CD4-positive, alpha-beta T cell (primary cell): ENCODE measurements at regions of chr1 and their contacts with region 1.

Region 1: GRCh38 chr1:16351994-16352841 is at the start of gene FBXO42:
- DNase-seq: peak; percentile 82 to 98 (median 91)
- ATAC-seq: peak; percentile 90
- H3K4me3 ChIP-seq: peak within 1 kb of the TSS; percentile 97
- H3K4me3 Mint-ChIP-seq: peak within 1 kb of the TSS; percentile 97
- H3K27ac ChIP-seq: peak within 1 kb of the TSS; percentile 83 to 89
- H3K27ac Mint-ChIP-seq: peak within 1 kb of the TSS; percentile 93
- H3K4me1 ChIP-seq: peaks cover 30% of the 10 kb centered on the region
- H3K4me1 Mint-ChIP-seq: peaks cover 34% of the 10 kb centered on the region
- H3K27me3 ChIP-seq: no peaks in the 10 kb centered on the region
- H3K27me3 Mint-ChIP-seq: no peaks in the 10 kb centered on the region
- CTCF ChIP-seq: peak; percentile 52
- total RNA-seq, gene FBXO42: 14.3 to 14.9 TPM

Region 2: GRCh38 chr1:16409536-16410152 is 57.4 kb after region 1 on chr1:
- CTCF ChIA-PET with region 1: no interaction called
- POLR2A ChIA-PET with region 1: no interaction called
- intact Hi-C with region 1: no loop called
- DNase-seq: no peak
- ATAC-seq: no peak
- H3K4me3 ChIP-seq: no peak overlapping the region
- H3K4me3 Mint-ChIP-seq: no peak overlapping the region
- H3K27ac ChIP-seq: no peak overlapping the region
- H3K27ac Mint-ChIP-seq: no peak overlapping the region
- H3K4me1 ChIP-seq: no peaks in the 10 kb centered on the region
- H3K4me1 Mint-ChIP-seq: no peaks in the 10 kb centered on the region
- H3K27me3 ChIP-seq: no peaks in the 10 kb centered on the region
- H3K27me3 Mint-ChIP-seq: no peaks in the 10 kb centered on the region
- CTCF ChIP-seq: no peak

Region 3: GRCh38 chr1:16464903-16465625 is 112.8 kb after region 1 on chr1:
- CTCF ChIA-PET with region 1: no interaction called
- POLR2A ChIA-PET with region 1: no interaction called
- intact Hi-C with region 1: no loop called
- DNase-seq: no peak
- ATAC-seq: no peak
- H3K4me3 ChIP-seq: no peak overlapping the region
- H3K4me3 Mint-ChIP-seq: no peak overlapping the region
- H3K27ac ChIP-seq: no peak overlapping the region
- H3K27ac Mint-ChIP-seq: no peak overlapping the region
- H3K4me1 ChIP-seq: no peaks in the 10 kb centered on the region
- H3K4me1 Mint-ChIP-seq: peaks cover 25% of the 10 kb centered on the region
- H3K27me3 ChIP-seq: no peaks in the 10 kb centered on the region
- H3K27me3 Mint-ChIP-seq: no peaks in the 10 kb centered on the region
- CTCF ChIP-seq: no peak

Region 4: GRCh38 chr1:16913833-16914662 is 561.8 kb after region 1 on chr1:
- CTCF ChIA-PET with region 1: no interaction called
- POLR2A ChIA-PET with region 1: no interaction called
- intact Hi-C with region 1: loop called in 1 of 2 experiments (anchors 5 kb)
- DNase-seq: peak; percentile 80 to 100 (median 96)
- ATAC-seq: peak; percentile 93
- H3K4me3 ChIP-seq: peak overlapping the region; percentile 67
- H3K4me3 Mint-ChIP-seq: peak overlapping the region; percentile 93
- H3K27ac ChIP-seq: peak overlapping the region in 1 of 2 donors; percentile 46
- H3K27ac Mint-ChIP-seq: peak overlapping the region; percentile 79
- H3K4me1 ChIP-seq: peaks cover 37% of the 10 kb centered on the region
- H3K4me1 Mint-ChIP-seq: peaks cover 42% of the 10 kb centered on the region
- H3K27me3 ChIP-seq: no peaks in the 10 kb centered on the region
- H3K27me3 Mint-ChIP-seq: no peaks in the 10 kb centered on the region
- CTCF ChIP-seq: no peak